ENCODE measurements at regions of chr18 and their contacts with region 1.

Region 1: GRCh38 chr18:57586251-57587049 is at the start of gene FECH:
- DNase-seq: peak; percentile 73 to 98 (median 83)

Region 2: GRCh38 chr18:57376503-57376902 is 209.9 kb before region 1 on chr18:
- intact Hi-C with region 1: no loop called
- DNase-seq: no peak

Region 3: DNA sequence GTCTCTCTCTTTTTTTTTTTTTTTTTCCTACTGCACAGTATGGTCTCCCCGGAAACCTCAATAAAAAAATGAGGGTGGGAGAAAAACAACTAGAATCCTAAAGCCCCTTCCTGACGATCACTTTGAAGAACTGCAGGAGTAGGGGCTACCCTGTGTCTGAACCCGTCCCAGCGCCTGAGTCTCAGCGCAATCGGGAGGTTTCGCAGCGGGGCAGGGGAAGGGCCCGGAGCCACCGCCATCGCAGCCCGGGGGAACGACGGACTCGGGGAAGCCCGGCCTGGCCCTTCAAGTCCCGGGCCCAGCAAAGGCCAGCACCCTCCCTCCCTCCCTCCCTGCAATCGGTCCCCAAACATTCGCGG is 34.8 kb after region 1 on chr18:
- intact Hi-C with region 1: loop called (anchors 5 kb)
- DNase-seq: peak in 1 of 10 donors; percentile 85